MCF 10A (cell line): ENCODE measurements at regions of chr1 and their contacts with region 1.

Region 1: DNA sequence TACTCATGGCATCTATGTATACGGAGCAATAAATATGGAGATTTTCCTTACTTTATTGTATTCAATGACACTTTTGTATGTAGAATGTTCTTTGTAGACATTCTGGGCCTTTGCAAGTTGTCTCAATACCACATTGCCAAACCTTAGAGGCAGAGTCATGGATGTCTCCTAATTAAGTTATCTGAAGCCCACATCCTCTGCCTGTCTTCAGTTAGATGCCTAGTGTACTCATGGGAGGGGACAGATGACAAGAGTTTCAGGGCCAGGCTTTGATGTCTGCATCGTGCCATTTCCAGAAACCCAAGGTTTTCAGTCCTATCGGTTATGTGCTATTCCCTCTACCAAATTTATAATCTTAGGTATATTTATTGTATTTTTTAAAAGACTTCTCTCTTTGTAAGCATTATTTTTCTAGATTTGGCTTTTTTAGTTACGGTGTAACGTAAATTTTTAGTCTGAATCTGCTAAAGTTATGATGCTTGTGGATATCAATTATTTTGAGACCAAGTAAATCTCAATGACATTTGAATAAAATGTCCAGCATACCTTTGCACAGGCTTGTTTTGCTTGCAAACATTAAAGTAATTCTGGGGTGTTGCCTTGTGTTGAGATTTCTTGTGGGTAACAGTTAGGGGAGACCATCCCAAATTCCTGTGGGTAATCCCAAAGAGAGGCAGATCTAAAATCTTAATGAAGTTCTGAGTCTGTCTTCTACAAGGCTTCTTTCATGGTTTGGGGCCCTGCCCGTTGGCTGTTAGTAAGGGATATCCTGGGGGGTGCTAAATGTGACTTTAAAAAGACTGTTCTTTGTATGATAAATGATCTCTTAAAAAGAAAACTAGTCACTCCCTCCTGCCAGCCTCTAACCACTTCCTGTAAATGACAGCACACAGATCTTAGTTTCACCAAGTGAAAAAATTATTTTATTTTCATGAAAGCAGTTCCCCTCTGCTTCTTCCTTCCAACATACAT is 8.0 kb upstream of the MACF1 start:
- DNase-seq: no peak
- H3K4me3 Mint-ChIP-seq: no peak overlapping the region
- H3K27ac Mint-ChIP-seq: peak overlapping the region; percentile 59
- H3K4me1 Mint-ChIP-seq: peaks cover 32% of the 10 kb centered on the region
- H3K27me3 Mint-ChIP-seq: no peaks in the 10 kb centered on the region
- CTCF ChIP-seq: no peak

Region 2: GRCh38 chr1:38758820-38759219 is 437.7 kb before region 1 on chr1:
- CTCF ChIA-PET with region 1: no interaction called
- POLR2A ChIA-PET with region 1: no interaction called
- intact Hi-C with region 1: no loop called
- DNase-seq: no peak
- H3K4me3 Mint-ChIP-seq: no peak overlapping the region
- H3K27ac Mint-ChIP-seq: no peak overlapping the region
- H3K4me1 Mint-ChIP-seq: no peaks in the 10 kb centered on the region
- H3K27me3 Mint-ChIP-seq: peaks cover 42% of the 10 kb centered on the region
- CTCF ChIP-seq: no peak

Region 3: DNA sequence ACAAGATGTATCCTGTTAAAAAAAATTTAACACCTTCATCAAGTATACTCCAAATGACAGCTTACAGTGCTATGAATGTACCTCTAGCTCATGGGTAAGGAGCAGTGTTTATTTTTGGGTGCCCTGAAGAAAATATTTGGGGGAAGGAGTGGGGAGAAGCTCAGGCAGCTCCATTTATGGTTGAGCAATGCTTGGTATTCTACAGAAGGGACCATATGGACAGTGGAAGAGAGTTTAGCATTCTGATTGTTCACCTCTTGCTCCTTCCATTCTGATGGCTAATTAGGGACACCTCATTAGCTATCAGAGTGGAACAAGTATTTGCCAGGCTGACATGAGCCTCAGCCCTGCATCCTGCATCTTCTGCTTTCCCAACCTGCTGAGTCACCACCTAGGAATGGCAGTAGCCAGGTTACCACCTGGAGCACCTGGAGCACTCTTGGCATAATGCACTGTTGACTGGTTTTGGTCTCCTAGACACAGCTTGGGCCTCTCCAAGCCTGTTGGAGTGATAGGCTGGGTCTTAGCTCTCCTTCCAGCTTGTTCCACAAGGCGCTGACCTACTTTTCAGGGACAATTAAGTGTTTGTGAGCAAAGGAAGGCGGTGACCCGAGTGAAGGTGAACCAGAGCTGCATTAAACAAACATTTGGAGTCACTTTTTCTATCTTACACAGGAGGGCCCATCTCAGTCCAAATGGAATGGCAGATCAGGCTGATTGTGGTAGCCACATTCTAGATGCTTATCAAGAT is 54.0 kb before region 1 on chr1:
- CTCF ChIA-PET with region 1: interaction called, 57 read pairs
- POLR2A ChIA-PET with region 1: interaction called, 28 read pairs
- intact Hi-C with region 1: no loop called
- DNase-seq: peak; percentile 87
- H3K4me3 Mint-ChIP-seq: no peak overlapping the region
- H3K27ac Mint-ChIP-seq: peak overlapping the region; percentile 49
- H3K4me1 Mint-ChIP-seq: peaks cover 36% of the 10 kb centered on the region
- H3K27me3 Mint-ChIP-seq: no peaks in the 10 kb centered on the region
- CTCF ChIP-seq: no peak

Region 4: GRCh38 chr1:39183503-39184353 is 12.8 kb before region 1 on chr1:
- CTCF ChIA-PET with region 1: interaction called, 25 read pairs
- POLR2A ChIA-PET with region 1: interaction called, 48 read pairs
- intact Hi-C with region 1: loop called (anchors 1 kb)
- DNase-seq: peak; percentile 98
- H3K4me3 Mint-ChIP-seq: peak overlapping the region; percentile 53
- H3K27ac Mint-ChIP-seq: peak overlapping the region; percentile 88
- H3K4me1 Mint-ChIP-seq: peaks cover 52% of the 10 kb centered on the region
- H3K27me3 Mint-ChIP-seq: no peaks in the 10 kb centered on the region
- CTCF ChIP-seq: peak; percentile 29

Region 5: DNA sequence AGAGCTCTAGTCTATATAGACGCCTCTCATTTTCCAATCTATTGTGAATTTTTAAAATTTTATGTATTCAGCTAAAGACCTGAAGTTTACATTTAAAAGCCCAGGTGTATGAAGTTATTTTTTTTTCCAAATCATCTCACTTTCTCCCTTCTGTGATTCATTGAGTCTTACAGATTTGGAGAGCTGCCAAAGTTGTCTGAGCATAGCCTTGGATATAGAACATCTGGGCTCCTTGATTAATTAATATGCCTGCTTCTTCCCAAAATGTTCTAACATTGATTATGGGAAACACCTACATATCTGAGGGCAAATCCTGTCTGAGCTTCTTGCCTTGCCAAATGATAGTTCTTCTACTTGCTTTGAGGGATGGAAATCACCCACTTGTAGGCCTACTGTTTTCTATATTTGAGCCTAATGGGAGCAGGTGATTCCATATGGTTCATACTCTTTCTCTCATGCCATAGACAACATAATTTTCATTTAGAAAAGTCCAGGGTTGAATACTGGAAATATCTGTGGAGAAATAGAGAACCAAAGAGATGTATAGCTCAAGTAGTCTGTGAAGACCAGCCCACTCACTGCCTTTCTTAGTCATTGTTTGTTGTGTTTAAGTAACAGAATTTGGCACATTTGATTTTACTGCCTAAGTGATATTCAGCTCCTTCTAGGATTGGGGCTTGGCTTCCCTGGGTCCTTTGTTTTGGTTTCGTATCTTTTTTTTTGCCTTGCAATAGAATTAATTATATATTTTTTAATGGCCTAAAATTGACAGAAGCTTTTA is 54.1 kb after region 1 on chr1:
- CTCF ChIA-PET with region 1: interaction called, 141 read pairs
- POLR2A ChIA-PET with region 1: interaction called, 8 read pairs
- intact Hi-C with region 1: loop called (anchors 2 kb)
- DNase-seq: peak; percentile 77
- H3K4me3 Mint-ChIP-seq: no peak overlapping the region
- H3K27ac Mint-ChIP-seq: peak overlapping the region; percentile 43
- H3K4me1 Mint-ChIP-seq: peaks cover 12% of the 10 kb centered on the region
- H3K27me3 Mint-ChIP-seq: no peaks in the 10 kb centered on the region
- CTCF ChIP-seq: no peak

Region 6: GRCh38 chr1:39275836-39276507 is 79.4 kb after region 1 on chr1:
- CTCF ChIA-PET with region 1: interaction called, 13 read pairs
- POLR2A ChIA-PET with region 1: interaction called, 12 read pairs
- intact Hi-C with region 1: no loop called
- DNase-seq: peak; percentile 56
- H3K4me3 Mint-ChIP-seq: no peak overlapping the region
- H3K27ac Mint-ChIP-seq: no peak overlapping the region
- H3K4me1 Mint-ChIP-seq: peaks cover 36% of the 10 kb centered on the region
- H3K27me3 Mint-ChIP-seq: no peaks in the 10 kb centered on the region
- CTCF ChIP-seq: no peak